ENCODE measurements at regions of chr22 and their contacts with region 1.

Region 1: GRCh38 chr22:37538590-37539357 is 19.6 kb upstream of the CARD10 start:
- DNase-seq: peak; percentile 96
- H3K4me3 Mint-ChIP-seq: peak overlapping the region; percentile 34
- H3K27ac Mint-ChIP-seq: peak overlapping the region; percentile 57
- H3K4me1 Mint-ChIP-seq: peaks cover 42% of the 10 kb centered on the region
- H3K27me3 Mint-ChIP-seq: peaks cover 22% of the 10 kb centered on the region

Region 2: DNA sequence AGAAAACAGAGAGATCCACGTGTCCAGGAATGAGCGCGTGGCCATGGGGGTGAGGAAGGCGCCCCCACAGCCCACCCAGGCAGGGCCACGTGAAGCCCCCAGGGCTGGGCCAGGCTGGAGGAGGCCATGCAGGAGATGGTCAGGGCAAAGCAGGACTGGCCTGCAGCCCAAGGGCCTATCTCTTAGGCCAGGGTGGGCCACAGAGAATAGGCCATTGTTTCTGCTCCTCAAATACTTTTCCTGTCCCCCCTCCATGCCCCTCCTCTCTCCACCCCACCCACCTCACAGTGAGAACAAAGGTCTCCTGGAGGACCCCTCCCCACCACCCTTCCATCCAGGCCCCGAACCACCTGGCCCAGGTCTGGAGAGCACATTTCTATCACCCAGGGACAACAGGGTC is 13.2 kb after region 1 on chr22:
- CTCF ChIA-PET with region 1: interaction called, 612 read pairs
- POLR2A ChIA-PET with region 1: interaction called, 3 read pairs
- intact Hi-C with region 1: no loop called
- DNase-seq: no peak
- H3K4me3 Mint-ChIP-seq: no peak overlapping the region
- H3K27ac Mint-ChIP-seq: no peak overlapping the region
- H3K4me1 Mint-ChIP-seq: no peaks in the 10 kb centered on the region
- H3K27me3 Mint-ChIP-seq: peaks cover 22% of the 10 kb centered on the region

Region 3: DNA sequence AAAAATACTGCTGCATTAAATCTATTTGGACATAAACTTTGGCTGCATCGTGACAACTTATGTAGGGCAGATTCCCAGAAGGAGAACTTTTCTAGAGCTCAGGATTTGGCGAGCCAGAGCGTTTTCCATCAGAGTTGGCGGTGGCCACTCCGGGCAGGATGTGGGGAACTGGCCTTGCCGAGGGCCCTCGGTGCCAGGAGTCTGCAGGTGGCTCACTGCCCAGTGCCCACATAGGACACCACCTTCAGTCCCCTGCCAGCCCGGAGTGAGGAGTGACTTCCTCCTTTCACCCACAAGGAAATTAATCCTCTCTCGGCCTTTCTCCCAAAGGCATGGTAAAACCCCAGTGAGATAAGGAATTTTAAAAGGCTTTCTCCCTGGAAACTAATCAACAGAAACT is 42.7 kb after region 1 on chr22:
- CTCF ChIA-PET with region 1: interaction called, 11 read pairs
- POLR2A ChIA-PET with region 1: no interaction called
- intact Hi-C with region 1: no loop called
- DNase-seq: no peak
- H3K4me3 Mint-ChIP-seq: no peak overlapping the region
- H3K27ac Mint-ChIP-seq: no peak overlapping the region
- H3K4me1 Mint-ChIP-seq: peaks cover 9% of the 10 kb centered on the region
- H3K27me3 Mint-ChIP-seq: peaks cover 3% of the 10 kb centered on the region

Region 4: GRCh38 chr22:37716708-37717107 is 177.9 kb after region 1 on chr22:
- CTCF ChIA-PET with region 1: no interaction called
- POLR2A ChIA-PET with region 1: no interaction called
- intact Hi-C with region 1: no loop called
- DNase-seq: no peak
- H3K4me3 Mint-ChIP-seq: no peak overlapping the region
- H3K27ac Mint-ChIP-seq: no peak overlapping the region
- H3K4me1 Mint-ChIP-seq: peaks cover 2% of the 10 kb centered on the region
- H3K27me3 Mint-ChIP-seq: no peaks in the 10 kb centered on the region

Region 5: GRCh38 chr22:37818409-37819099 is 279.8 kb after region 1 on chr22:
- CTCF ChIA-PET with region 1: no interaction called
- POLR2A ChIA-PET with region 1: no interaction called
- intact Hi-C with region 1: no loop called
- DNase-seq: peak; percentile 81
- H3K4me3 Mint-ChIP-seq: no peak overlapping the region
- H3K27ac Mint-ChIP-seq: no peak overlapping the region
- H3K4me1 Mint-ChIP-seq: peaks cover 11% of the 10 kb centered on the region
- H3K27me3 Mint-ChIP-seq: peaks cover 13% of the 10 kb centered on the region

Measured in activated CD4-positive, alpha-beta memory T cell treated with anti-CD3 and anti-CD28 coated beads for 36 hours (primary cell).